AG04450 (cell line): ENCODE measurements at regions of chr11 and their contacts with region 1.

Region 1: GRCh38 chr11:82775736-82776346 is 42.2 kb upstream of the FAM181B start:
- DNase-seq: peak; percentile 8
- H3K4me3 ChIP-seq: 0 out of 2 replicates have a peak overlapping the region, but pooled peaks have one; percentile 5
- H3K27ac ChIP-seq: no peak overlapping the region
- H3K27me3 ChIP-seq: no peaks in the 10 kb centered on the region
- CTCF ChIP-seq: peak; percentile 92

Region 2: DNA sequence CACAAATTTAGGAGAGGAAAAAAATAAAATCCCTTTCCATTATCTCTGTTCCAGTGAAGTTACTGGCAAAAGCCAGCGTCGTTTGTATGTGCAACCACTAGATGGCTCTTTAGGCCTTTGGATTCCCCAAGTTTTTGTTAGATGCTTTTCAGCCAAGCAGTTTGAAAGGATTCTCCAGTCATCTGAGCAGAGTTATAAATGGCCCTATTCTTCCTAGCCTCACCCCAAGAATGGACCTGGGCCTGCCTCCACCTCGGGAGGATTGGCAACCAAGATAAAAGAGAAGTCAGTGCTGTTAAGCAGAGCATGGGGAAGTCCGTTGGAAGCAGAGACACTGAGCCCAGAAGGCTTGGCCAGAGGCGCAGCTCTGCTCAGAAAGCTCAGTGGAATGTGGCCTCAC is 57.5 kb before region 1 on chr11:
- CTCF ChIA-PET with region 1: interaction called, 11 read pairs
- POLR2A ChIA-PET with region 1: no interaction called
- DNase-seq: peak; percentile 20
- H3K4me3 ChIP-seq: no peak overlapping the region
- H3K27ac ChIP-seq: no peak overlapping the region
- H3K27me3 ChIP-seq: peaks cover 4% of the 10 kb centered on the region
- CTCF ChIP-seq: peak; percentile 83

Region 3: DNA sequence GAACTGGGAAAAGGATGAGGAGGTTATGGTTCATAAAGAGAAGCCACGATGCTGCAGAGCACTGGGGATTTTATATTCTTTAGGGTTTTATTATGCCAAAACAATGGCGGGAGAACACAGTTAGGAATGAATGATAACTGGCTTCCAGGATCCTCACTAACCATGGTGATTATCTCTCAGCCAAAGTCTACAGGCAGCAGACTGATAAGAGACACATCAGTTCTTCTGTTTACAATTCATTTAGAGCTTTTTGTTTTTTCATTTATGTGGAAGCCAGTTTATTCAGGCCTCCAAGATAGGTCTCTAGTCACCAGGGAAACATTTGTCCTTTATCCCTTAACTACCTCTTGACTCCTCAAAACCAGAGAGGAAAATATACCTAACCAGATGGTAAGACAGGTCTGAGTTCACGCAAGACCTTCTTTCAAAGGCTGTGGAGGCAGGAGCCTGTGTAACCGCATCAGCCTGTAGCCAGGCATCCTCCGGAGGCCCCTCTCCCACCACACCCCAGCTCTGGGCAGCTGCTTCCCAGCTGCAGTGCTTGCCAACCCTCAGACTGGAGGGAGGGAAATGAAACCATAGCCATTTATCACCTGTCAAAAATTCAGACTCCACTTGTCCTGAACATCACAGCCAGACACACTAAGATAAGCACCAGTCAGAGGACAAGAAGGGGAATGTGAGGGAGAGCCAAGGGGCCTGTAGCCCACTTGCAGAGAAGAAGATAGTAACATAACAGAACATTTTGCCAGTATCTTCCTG is 15.1 kb after region 1 on chr11:
- CTCF ChIA-PET with region 1: interaction called, 11 read pairs
- POLR2A ChIA-PET with region 1: no interaction called
- DNase-seq: no peak
- H3K4me3 ChIP-seq: no peak overlapping the region
- H3K27ac ChIP-seq: no peak overlapping the region
- H3K27me3 ChIP-seq: no peaks in the 10 kb centered on the region
- CTCF ChIP-seq: no peak

Region 4: GRCh38 chr11:82818409-82819043 is 42.7 kb after region 1 on chr11:
- CTCF ChIA-PET with region 1: interaction called, 18 read pairs
- POLR2A ChIA-PET with region 1: no interaction called
- DNase-seq: no peak
- H3K4me3 ChIP-seq: no peak overlapping the region
- H3K27ac ChIP-seq: no peak overlapping the region
- H3K27me3 ChIP-seq: peaks cover 7% of the 10 kb centered on the region
- CTCF ChIP-seq: no peak

Region 5: GRCh38 chr11:82858556-82859091 is 82.8 kb after region 1 on chr11:
- CTCF ChIA-PET with region 1: interaction called, 12 read pairs
- POLR2A ChIA-PET with region 1: no interaction called
- DNase-seq: peak; percentile 23
- H3K4me3 ChIP-seq: peak overlapping the region; percentile 14
- H3K27ac ChIP-seq: peak overlapping the region; percentile 95
- H3K27me3 ChIP-seq: no peaks in the 10 kb centered on the region
- CTCF ChIP-seq: no peak